GM12878 (cell line): ENCODE measurements at regions of chr19 and their contacts with region 1.

Region 1: GRCh38 chr19:48391107-48391986 is at the start of gene KDELR1:
- DNase-seq: no peak
- ATAC-seq: peak; percentile 91
- H3K4me3 ChIP-seq: peak within 1 kb of the TSS; percentile 95
- H3K27ac ChIP-seq: peak within 1 kb of the TSS; percentile 75
- H3K4me1 ChIP-seq: peaks cover 5% of the 10 kb centered on the region; the same call in 1 of the 2 replicates
- H3K27me3 ChIP-seq: peaks cover 13 to 16% of the 10 kb centered on the region in 2 experiments
- CTCF ChIP-seq: peak; percentile 91 to 96 (median 95)
- EP300 ChIP-seq: no peak
- POLR2A ChIP-seq: peak; percentile 68; the same call in 1 of the 2 replicates
- RAD21 ChIP-seq: no peak
- polyA plus RNA-seq, gene KDELR1: 2.3 to 13.2 TPM

Region 2: DNA sequence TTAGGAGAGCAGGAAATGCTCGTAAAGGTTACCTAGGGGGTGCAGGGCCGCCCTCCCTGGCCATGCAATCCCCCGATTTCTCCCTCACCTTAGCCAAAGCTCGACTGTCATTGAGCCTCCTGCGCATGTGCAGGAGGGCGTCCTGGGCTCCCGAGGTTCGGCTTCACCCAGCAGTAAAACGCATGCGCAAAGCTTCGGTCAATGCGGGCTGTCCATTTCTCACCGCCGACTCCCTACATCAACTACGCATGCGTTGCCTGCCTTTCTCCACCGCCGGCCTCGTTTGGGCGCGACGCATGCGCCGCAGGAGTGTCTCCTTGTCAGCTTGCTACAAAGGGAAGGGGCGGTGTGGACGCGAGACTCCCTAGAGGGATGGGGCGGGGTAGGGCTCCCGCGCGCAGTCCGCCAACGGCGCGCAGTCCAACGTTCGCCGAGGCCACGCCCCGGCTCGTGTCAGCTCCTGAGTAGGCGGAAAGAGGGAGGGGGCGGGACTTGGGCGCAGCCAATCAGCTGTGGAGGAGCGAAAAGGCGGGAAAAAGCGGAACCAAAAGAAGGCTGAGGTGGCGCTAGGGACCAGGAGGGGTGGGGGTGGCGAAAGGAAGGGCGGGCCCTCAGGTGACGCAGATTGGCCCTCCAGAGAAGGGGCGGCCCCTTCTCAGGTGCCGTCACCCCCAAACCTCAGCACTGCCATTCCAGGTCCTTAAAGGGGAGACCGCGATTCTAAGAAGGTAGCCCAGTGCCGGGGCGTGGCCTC is 27.4 kb before region 1 on chr19 and contains the starts of genes SYNGR4 and TMEM143:
- CTCF ChIA-PET with region 1: interaction called, 21 read pairs
- POLR2A ChIA-PET with region 1: interaction called, 16 read pairs
- RAD21 ChIA-PET with region 1: interaction called, 4 read pairs
- SMC1A ChIA-PET with region 1: interaction called, 7 read pairs
- in situ Hi-C with region 1: no loop called
- intact Hi-C with region 1: no loop called
- DNase-seq: peak; percentile 99
- ATAC-seq: peak; percentile 90
- H3K4me3 ChIP-seq: peak within 1 kb of the TSS; percentile 82
- H3K27ac ChIP-seq: peak within 1 kb of the TSS; percentile 99
- H3K4me1 ChIP-seq: peaks cover 9% of the 10 kb centered on the region; the same call in 1 of the 2 replicates
- H3K27me3 ChIP-seq: no peaks in the 10 kb centered on the region
- CTCF ChIP-seq: no peak
- EP300 ChIP-seq: peak in 1 of 2 experiments; percentile 33; a peak in 1 of 4 replicates
- POLR2A ChIP-seq: peak; percentile 70
- RAD21 ChIP-seq: no peak
- polyA plus RNA-seq, gene SYNGR4: not detected
- polyA plus RNA-seq, gene TMEM143: 1.5 to 2.4 TPM

Region 3: GRCh38 chr19:48379058-48379457 is 12.3 kb before region 1 on chr19:
- CTCF ChIA-PET with region 1: interaction called, 10 read pairs
- POLR2A ChIA-PET with region 1: no interaction called
- RAD21 ChIA-PET with region 1: no interaction called
- SMC1A ChIA-PET with region 1: no interaction called
- in situ Hi-C with region 1: no loop called
- intact Hi-C with region 1: no loop called
- DNase-seq: no peak
- ATAC-seq: no peak
- H3K4me3 ChIP-seq: no peak overlapping the region
- H3K27ac ChIP-seq: no peak overlapping the region
- H3K4me1 ChIP-seq: no peaks in the 10 kb centered on the region
- H3K27me3 ChIP-seq: no peaks in the 10 kb centered on the region
- CTCF ChIP-seq: no peak
- EP300 ChIP-seq: no peak
- POLR2A ChIP-seq: no peak
- RAD21 ChIP-seq: no peak

Region 4: DNA sequence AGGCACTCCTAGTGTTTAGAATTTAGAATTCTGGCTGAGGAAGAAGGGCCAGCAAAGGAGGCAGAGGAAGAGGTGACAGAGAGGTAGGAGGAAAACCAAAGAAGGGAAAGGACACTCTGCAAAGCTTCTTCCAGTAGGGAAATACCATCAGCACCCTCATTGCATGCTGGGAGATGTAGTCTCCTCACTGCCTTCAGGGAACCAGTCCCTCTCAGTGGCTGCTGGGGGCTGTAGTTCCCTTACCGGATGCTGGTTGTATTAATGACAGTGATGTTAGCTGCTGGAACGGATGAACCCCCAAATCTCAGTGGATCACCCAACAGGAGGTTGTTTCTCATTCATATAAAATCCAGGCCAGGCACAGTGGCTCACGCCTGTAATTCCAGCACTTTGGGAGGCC is 12.3 kb after region 1 on chr19:
- CTCF ChIA-PET with region 1: interaction called, 24 read pairs
- POLR2A ChIA-PET with region 1: interaction called, 3 read pairs
- RAD21 ChIA-PET with region 1: interaction called, 3 read pairs
- SMC1A ChIA-PET with region 1: interaction called, 4 read pairs
- in situ Hi-C with region 1: no loop called
- intact Hi-C with region 1: no loop called
- DNase-seq: no peak
- ATAC-seq: peak; percentile 93
- H3K4me3 ChIP-seq: no peak overlapping the region
- H3K27ac ChIP-seq: no peak overlapping the region
- H3K4me1 ChIP-seq: peaks cover 6% of the 10 kb centered on the region
- H3K27me3 ChIP-seq: no peaks in the 10 kb centered on the region
- CTCF ChIP-seq: no peak
- EP300 ChIP-seq: no peak
- POLR2A ChIP-seq: no peak
- RAD21 ChIP-seq: no peak

Region 5: GRCh38 chr19:48445606-48446481 is 54.5 kb after region 1 on chr19 and contains the start of gene GRWD1:
- CTCF ChIA-PET with region 1: interaction called, 18 read pairs
- POLR2A ChIA-PET with region 1: no interaction called
- RAD21 ChIA-PET with region 1: interaction called, 10 read pairs
- SMC1A ChIA-PET with region 1: interaction called, 8 read pairs
- in situ Hi-C with region 1: no loop called
- intact Hi-C with region 1: no loop called
- DNase-seq: peak; percentile 95
- ATAC-seq: peak; percentile 93
- H3K4me3 ChIP-seq: peak within 1 kb of the TSS; percentile 87
- H3K27ac ChIP-seq: peak within 1 kb of the TSS; percentile 89
- H3K4me1 ChIP-seq: peaks cover 25% of the 10 kb centered on the region
- H3K27me3 ChIP-seq: peaks cover 0 to 1% of the 10 kb centered on the region in 2 experiments; a peak in 1 of 4 replicates
- CTCF ChIP-seq: 0 out of 6 replicates have a peak, but pooled peaks of 1 of the 3 experiments have one; percentile 1
- EP300 ChIP-seq: no peak
- POLR2A ChIP-seq: peak; percentile 93
- RAD21 ChIP-seq: no peak
- polyA plus RNA-seq, gene GRWD1: 1.4 to 3.0 TPM